ENCODE measurements at regions of chr17 and their contacts with region 1.

Region 1: GRCh38 chr17:11997147-11997846 is at the start of gene ZNF18:
- DNase-seq: peak; percentile 97
- ATAC-seq: peak; percentile 96 to 99 (median 97)
- H3K4me3 ChIP-seq: peak within 1 kb of the TSS; percentile 86
- H3K4me3 Mint-ChIP-seq: peak within 1 kb of the TSS; percentile 95
- H3K27ac ChIP-seq: peak within 1 kb of the TSS; percentile 88
- H3K27ac Mint-ChIP-seq: peak within 1 kb of the TSS; percentile 87 to 97
- H3K4me1 ChIP-seq: peaks cover 7% of the 10 kb centered on the region
- H3K4me1 Mint-ChIP-seq: peaks cover 19 to 26% of the 10 kb centered on the region in 2 donors
- H3K27me3 ChIP-seq: no peaks in the 10 kb centered on the region
- H3K27me3 Mint-ChIP-seq: peaks cover 0 to 3% of the 10 kb centered on the region in 2 donors
- CTCF ChIP-seq: no peak
- total RNA-seq, gene ZNF18: 16.8 to 20.8 (median 17.5) TPM

Region 2: GRCh38 chr17:12020642-12021622 is 23.6 kb after region 1 on chr17 and contains the start of gene MAP2K4:
- intact Hi-C with region 1: loop called (anchors 1 kb)
- DNase-seq: peak; percentile 94 to 98
- ATAC-seq: peak; percentile 95 to 100 (median 98)
- H3K4me3 ChIP-seq: peak within 1 kb of the TSS; percentile 23
- H3K4me3 Mint-ChIP-seq: peak within 1 kb of the TSS; percentile 83
- H3K27ac ChIP-seq: no peak within 1 kb of the TSS
- H3K27ac Mint-ChIP-seq: peak within 1 kb of the TSS; percentile 48 to 72
- H3K4me1 ChIP-seq: peaks cover 10% of the 10 kb centered on the region
- H3K4me1 Mint-ChIP-seq: peaks cover 46 to 50% of the 10 kb centered on the region in 2 donors
- H3K27me3 ChIP-seq: no peaks in the 10 kb centered on the region
- H3K27me3 Mint-ChIP-seq: peaks cover 0 to 2% of the 10 kb centered on the region in 2 donors
- CTCF ChIP-seq: no peak
- total RNA-seq, gene MAP2K4: 30.1 to 35.0 (median 33.7) TPM